B cell (primary cell): ENCODE measurements at regions of chr2 and their contacts with region 1.

Region 1: DNA sequence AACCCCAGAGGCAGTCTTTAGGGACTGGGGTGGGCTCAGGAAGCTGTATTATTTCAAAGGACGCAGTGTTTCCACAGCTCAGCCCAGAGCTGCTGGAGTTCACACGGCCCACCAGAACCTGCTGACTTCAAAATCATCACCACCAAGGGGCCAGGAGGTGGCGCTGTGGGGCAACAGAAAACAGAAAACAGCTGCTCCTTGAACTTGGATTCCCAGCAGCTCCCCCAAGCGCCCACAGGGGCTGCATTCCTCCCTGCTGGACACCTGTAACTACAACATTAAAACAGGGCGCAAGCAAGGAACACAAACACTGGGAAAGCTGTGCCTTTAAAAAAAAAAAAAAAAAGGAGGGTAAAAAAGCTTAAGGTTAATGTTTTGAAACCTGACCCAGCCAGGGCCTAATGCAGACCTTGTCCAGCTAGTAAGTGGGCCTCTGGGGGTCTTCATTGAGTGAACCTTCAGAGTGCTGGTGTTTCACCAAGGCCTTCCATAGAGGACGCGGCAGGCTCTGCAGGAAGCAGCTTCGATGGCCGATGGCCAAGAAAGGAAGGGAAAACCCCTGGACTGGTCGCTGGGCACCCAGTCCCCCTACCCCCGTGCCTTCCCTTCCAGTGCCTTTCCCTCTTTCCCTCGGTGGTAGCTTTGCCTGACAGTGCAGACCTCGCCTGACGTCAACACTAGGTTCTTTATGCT is 25.9 kb downstream of the MLPH start:
- DNase-seq: peak; percentile 84
- ATAC-seq: peak; percentile 86
- H3K4me3 ChIP-seq: no peak overlapping the region
- H3K4me3 Mint-ChIP-seq: no peak overlapping the region
- H3K27ac ChIP-seq: no peak overlapping the region
- H3K27ac Mint-ChIP-seq: no peak overlapping the region
- H3K4me1 ChIP-seq: no peaks in the 10 kb centered on the region
- H3K4me1 Mint-ChIP-seq: no peaks in the 10 kb centered on the region
- H3K27me3 ChIP-seq: peaks cover 0 to 7% (median 3%) of the 10 kb centered on the region in 4 experiments
- H3K27me3 Mint-ChIP-seq: peaks cover 13% of the 10 kb centered on the region
- CTCF ChIP-seq: peak; percentile 91

Region 2: DNA sequence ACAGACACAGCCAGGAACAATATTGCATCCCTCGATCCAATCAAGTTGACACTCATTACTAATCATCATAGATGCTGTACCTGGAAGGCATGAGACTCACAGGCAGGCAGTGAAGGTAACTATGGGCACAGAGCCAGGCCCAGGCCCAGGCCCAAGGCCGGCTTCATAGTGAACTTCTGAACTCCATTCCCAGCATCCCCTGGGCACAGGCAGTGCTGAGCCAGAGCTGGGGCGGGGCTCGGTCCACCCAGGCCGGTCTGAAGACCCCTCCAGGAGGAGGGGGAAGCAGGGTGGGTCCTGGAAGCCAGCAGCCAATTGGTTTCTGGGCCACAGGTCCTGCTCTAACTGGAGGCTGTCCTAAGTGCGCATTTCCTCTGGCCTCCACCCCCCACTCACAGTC is 11.7 kb after region 1 on chr2:
- CTCF ChIA-PET with region 1: interaction called, 14 read pairs
- POLR2A ChIA-PET with region 1: no interaction called
- intact Hi-C with region 1: no loop called
- DNase-seq: no peak
- ATAC-seq: no peak
- H3K4me3 ChIP-seq: no peak overlapping the region
- H3K4me3 Mint-ChIP-seq: no peak overlapping the region
- H3K27ac ChIP-seq: no peak overlapping the region
- H3K27ac Mint-ChIP-seq: no peak overlapping the region
- H3K4me1 ChIP-seq: peaks cover 0 to 5% of the 10 kb centered on the region in 2 donors
- H3K4me1 Mint-ChIP-seq: peaks cover 2% of the 10 kb centered on the region
- H3K27me3 ChIP-seq: no peaks in the 10 kb centered on the region
- H3K27me3 Mint-ChIP-seq: no peaks in the 10 kb centered on the region
- CTCF ChIP-seq: no peak

Region 3: DNA sequence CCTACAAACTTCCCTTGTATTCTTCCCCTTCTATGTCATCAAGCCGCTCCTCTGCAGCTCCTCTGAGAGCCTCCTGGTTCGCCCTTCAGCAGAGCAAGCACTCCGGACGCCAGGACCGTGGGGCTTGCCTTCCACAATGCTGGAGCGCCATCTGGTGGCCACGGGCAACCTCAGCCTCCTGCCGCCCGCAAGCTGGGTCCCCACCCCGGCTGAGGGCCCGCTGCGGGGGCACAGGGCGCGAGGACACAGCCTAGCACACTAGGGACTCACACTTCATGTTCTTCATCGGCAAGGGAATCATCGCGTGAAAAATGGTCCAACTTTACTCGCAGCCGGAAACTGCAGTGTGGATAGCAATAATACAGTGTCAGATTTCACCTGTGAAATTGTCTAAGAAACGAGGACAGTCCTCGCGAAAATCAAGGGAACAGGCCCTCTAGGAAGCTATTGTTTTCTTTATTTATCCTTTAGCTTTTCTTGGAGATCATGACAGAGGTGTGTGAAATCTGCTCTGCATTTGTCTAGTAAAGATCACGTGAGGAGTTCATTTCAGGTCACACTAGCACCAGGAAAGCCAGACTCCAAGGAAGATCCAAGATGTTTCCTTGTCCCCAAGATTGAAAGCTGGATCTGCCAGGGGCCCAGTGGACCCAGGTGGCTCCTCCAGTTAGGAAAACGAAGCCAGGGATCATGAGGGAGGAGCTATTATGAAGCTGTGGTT is 59.3 kb after region 1 on chr2:
- CTCF ChIA-PET with region 1: interaction called, 149 read pairs
- POLR2A ChIA-PET with region 1: no interaction called
- intact Hi-C with region 1: no loop called
- DNase-seq: peak; percentile 87
- ATAC-seq: peak; percentile 93
- H3K4me3 ChIP-seq: no peak overlapping the region
- H3K4me3 Mint-ChIP-seq: no peak overlapping the region
- H3K27ac ChIP-seq: no peak overlapping the region
- H3K27ac Mint-ChIP-seq: no peak overlapping the region
- H3K4me1 ChIP-seq: peaks cover 0 to 7% of the 10 kb centered on the region in 2 donors
- H3K4me1 Mint-ChIP-seq: peaks cover 6% of the 10 kb centered on the region
- H3K27me3 ChIP-seq: peaks cover 0 to 14% (median 2%) of the 10 kb centered on the region in 4 experiments
- H3K27me3 Mint-ChIP-seq: peaks cover 36% of the 10 kb centered on the region
- CTCF ChIP-seq: peak; percentile 98

Region 4: DNA sequence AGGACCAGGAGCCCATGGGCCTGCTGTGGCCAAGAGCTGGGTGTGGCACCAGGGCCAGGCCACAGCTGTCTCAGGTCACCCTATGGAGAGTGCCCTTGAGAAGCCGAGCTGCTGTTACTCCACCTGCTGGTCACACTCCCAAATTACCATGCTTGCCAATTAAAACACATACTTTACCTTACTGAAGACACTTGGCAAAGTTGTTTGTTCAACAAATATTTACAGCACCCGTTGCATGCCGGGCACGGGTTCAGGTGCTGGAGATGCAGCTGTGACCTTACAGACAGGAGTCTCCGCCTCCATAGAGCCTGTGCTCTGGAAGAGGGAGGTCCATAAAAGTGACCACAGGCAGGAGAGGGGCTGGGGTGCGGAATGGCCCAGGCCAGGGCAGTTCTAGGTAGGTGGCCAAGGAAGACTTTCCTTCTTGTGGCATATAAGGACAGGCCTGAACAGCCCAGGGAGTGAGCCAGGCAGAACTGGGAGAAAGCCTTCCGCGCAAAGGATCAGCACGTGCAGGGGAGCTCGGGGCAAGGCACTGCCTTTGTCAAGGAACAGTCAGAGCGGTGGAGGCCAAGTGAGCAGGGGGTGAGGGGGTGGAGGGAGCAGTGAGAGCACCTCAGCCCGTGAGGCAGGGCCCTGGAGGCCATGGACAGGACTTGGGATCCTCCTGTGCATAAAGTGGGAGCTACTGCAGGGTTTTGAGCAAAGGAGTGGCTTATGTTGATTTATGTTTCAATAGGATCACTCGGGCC is 262.1 kb after region 1 on chr2:
- CTCF ChIA-PET with region 1: interaction called, 25 read pairs
- POLR2A ChIA-PET with region 1: no interaction called
- intact Hi-C with region 1: loop called (anchors 1 kb)
- DNase-seq: peak; percentile 64
- ATAC-seq: peak; percentile 67
- H3K4me3 ChIP-seq: no peak overlapping the region
- H3K4me3 Mint-ChIP-seq: no peak overlapping the region
- H3K27ac ChIP-seq: no peak overlapping the region
- H3K27ac Mint-ChIP-seq: peak overlapping the region; percentile 41
- H3K4me1 ChIP-seq: no peaks in the 10 kb centered on the region
- H3K4me1 Mint-ChIP-seq: no peaks in the 10 kb centered on the region
- H3K27me3 ChIP-seq: no peaks in the 10 kb centered on the region
- H3K27me3 Mint-ChIP-seq: no peaks in the 10 kb centered on the region
- CTCF ChIP-seq: peak; percentile 75